ENCODE measurements at regions of chr10 and their contacts with region 1.

Region 1: DNA sequence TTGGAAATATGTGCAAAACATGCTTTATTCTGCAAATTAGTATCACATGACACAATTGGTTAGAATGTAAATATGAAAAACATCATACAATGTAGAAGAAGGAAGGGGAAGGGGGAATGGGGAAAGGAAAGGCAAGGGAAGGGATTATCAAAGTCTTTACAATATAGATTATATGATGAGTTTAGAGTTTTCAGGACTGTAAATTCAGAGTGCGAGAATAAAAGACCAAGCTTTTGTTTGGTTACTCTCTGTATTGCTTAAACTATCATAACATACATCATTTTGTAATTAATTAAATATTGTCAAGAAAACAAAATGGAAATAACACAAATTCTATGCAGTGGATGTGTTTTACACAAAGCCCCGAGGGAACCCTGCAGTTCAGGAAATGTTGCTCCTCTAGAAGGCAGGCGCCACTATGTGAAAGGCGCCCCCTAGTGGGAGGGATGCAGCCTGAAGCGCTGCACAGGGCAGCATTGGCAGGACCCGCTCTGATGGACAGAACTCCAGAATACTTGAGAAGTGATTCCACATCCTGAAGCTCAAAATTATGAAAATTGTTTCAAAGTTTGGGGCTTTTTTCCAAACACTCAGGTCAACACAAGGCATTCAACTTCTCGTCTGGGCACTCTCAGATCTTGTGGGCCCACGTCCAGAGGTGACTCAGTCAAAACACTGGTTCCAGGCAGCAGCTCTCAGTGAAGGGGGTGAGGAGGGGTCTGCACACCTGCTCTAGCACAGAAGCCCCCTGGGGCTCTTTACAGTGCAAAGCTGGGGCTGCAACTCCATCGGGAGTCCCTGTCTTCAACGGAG is 31.6 kb upstream of the TMEM254 start:
- DNase-seq: peak; percentile 63 to 66
- ATAC-seq: peak; percentile 94 to 98
- H3K4me3 ChIP-seq: no peak overlapping the region
- H3K27ac ChIP-seq: no peak overlapping the region
- H3K4me1 ChIP-seq: no peaks in the 10 kb centered on the region
- CTCF ChIP-seq: peak; percentile 88
- EP300 ChIP-seq: no peak
- POLR2A ChIP-seq: no peak
- RAD21 ChIP-seq: peak; percentile 68 to 70

Region 2: DNA sequence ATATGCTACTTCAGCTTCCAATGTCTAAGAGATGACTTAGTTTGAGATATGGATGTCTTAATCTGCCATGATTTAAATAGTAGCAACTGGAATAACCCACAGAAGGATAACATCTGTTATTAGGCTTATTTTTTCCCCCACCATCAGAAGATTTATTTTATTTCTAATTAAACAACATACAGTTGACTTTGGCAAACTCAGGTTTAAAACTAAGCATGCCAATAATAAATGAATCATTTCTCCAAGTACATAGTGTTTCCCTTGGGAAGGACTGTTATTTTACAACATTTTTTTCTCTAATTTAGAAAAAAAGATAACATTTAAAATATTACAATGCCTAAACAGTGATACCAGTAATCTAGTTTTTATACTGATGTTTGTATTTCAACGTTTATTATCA is 156.4 kb before region 1 on chr10:
- CTCF ChIA-PET with region 1: no interaction called
- POLR2A ChIA-PET with region 1: no interaction called
- DNase-seq: no peak
- ATAC-seq: no peak
- H3K4me3 ChIP-seq: no peak overlapping the region
- H3K27ac ChIP-seq: no peak overlapping the region
- H3K4me1 ChIP-seq: no peaks in the 10 kb centered on the region
- CTCF ChIP-seq: no peak
- EP300 ChIP-seq: no peak
- POLR2A ChIP-seq: no peak
- RAD21 ChIP-seq: no peak

Region 3: GRCh38 chr10:79981450-79982361 is 65.1 kb before region 1 on chr10:
- CTCF ChIA-PET with region 1: interaction called, 10 read pairs
- POLR2A ChIA-PET with region 1: no interaction called
- DNase-seq: peak; percentile 51 to 69
- ATAC-seq: peak; percentile 95 to 97
- H3K4me3 ChIP-seq: peak overlapping the region; percentile 86
- H3K27ac ChIP-seq: peak overlapping the region; percentile 90 to 93
- H3K4me1 ChIP-seq: 0 out of 3 replicates have a peak, but pooled peaks cover 9% of the 10 kb centered on the region
- CTCF ChIP-seq: no peak
- EP300 ChIP-seq: no peak
- POLR2A ChIP-seq: peak; percentile 68
- RAD21 ChIP-seq: no peak

Region 4: GRCh38 chr10:80064120-80064886 is 17.5 kb after region 1 on chr10:
- CTCF ChIA-PET with region 1: interaction called, 32 read pairs
- POLR2A ChIA-PET with region 1: no interaction called
- DNase-seq: no peak
- ATAC-seq: no peak
- H3K4me3 ChIP-seq: no peak overlapping the region
- H3K27ac ChIP-seq: no peak overlapping the region
- H3K4me1 ChIP-seq: no peaks in the 10 kb centered on the region
- CTCF ChIP-seq: no peak
- EP300 ChIP-seq: no peak
- POLR2A ChIP-seq: no peak
- RAD21 ChIP-seq: no peak